ENCODE measurements at regions of chr12 and their contacts with region 1.

Region 1: DNA sequence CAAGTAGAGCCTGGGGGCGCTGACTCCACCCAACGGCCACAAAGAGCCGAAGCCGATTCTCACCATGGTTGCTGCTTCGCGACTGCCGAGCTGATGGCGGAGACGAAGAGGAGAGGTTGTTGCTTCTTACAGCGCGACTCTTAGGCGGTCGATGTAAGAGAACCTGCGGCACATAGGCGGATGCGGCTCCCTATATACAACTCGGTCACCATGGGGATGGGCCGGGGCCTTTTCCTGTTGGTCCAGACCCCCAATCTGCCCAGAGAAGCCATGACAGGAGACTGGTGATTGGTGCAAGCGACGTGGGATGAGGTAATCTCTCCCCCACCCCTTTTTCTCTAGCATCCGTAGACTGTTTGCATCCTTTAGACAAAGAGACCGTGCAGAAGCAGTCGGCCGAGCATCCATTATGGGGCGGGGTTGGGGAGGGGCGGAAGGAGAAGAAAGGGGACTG is at the start of gene TUBA1A:
- DNase-seq: peak; percentile 80 to 99 (median 96)
- ATAC-seq: peak; percentile 79 to 84
- H3K4me3 Mint-ChIP-seq: peak within 1 kb of the TSS; percentile 91 to 99 (median 96)
- H3K27ac Mint-ChIP-seq: peak within 1 kb of the TSS; percentile 97 to 100 (median 99)
- H3K4me1 Mint-ChIP-seq: peaks cover 14 to 31% (median 24%) of the 10 kb centered on the region in 4 donors
- H3K27me3 Mint-ChIP-seq: no peaks in the 10 kb centered on the region
- polyA plus RNA-seq, gene TUBA1A: 139 to 168 (median 147) TPM

Region 2: GRCh38 chr12:49069507-49070346 is 119.2 kb before region 1 on chr12 and contains the start of gene RHEBL1:
- POLR2A ChIA-PET with region 1: interaction called, 14 read pairs
- DNase-seq: peak; percentile 93 to 99 (median 98)
- ATAC-seq: peak; percentile 98 to 99
- H3K4me3 Mint-ChIP-seq: peak within 1 kb of the TSS; percentile 91 to 99 (median 96)
- H3K27ac Mint-ChIP-seq: peak within 1 kb of the TSS; percentile 66 to 97 (median 92)
- H3K4me1 Mint-ChIP-seq: peaks cover 10 to 20% (median 18%) of the 10 kb centered on the region in 4 donors
- H3K27me3 Mint-ChIP-seq: no peaks in the 10 kb centered on the region
- polyA plus RNA-seq, gene RHEBL1: 3.0 to 3.6 (median 3.4) TPM

Region 3: GRCh38 chr12:49110464-49111155 is 78.3 kb before region 1 on chr12 and contains the start of gene LMBR1L:
- POLR2A ChIA-PET with region 1: interaction called, 52 read pairs
- DNase-seq: peak; percentile 85 to 99 (median 96)
- ATAC-seq: peak; percentile 93 to 94
- H3K4me3 Mint-ChIP-seq: peak within 1 kb of the TSS; percentile 89 to 99 (median 98)
- H3K27ac Mint-ChIP-seq: peak within 1 kb of the TSS; percentile 92 to 99 (median 98)
- H3K4me1 Mint-ChIP-seq: peaks cover 26 to 48% (median 44%) of the 10 kb centered on the region in 4 donors
- H3K27me3 Mint-ChIP-seq: no peaks in the 10 kb centered on the region
- polyA plus RNA-seq, gene LMBR1L: 34.0 to 45.8 (median 34.6) TPM

Region 4: DNA sequence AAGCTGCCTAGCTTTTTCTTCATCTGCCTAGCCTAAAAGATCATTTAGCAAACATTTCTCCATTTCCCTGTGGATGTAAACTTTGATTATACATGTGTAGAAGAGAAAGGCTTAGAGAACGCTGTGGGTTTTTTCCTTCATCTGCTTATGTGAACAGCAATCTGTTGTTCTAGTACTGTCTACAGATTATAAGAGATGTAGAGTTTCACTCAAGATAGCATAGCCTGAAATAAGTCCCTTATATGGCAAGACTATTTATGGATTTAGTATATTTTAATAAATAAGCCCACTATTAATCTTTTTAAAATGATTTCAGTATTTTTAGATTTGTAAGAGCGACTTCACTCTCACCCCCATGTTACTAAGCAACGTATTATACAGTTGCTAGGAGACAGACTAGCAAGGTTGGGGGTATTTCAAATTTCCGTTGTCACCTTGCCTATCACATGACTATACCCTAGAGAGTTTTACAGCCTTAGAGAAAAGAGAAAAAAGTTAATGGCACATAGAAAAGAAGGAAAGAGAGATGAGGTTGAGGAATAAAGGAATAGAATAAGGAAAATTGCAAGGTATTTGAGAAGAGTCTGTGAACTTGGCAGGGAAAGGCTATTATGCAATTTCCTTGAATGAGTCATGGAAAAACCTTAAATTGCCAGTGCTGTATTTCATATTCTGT is 12.1 kb after region 1 on chr12:
- POLR2A ChIA-PET with region 1: interaction called, 13 read pairs
- DNase-seq: peak in 4 of 10 donors; percentile 47 to 74 (median 60)
- ATAC-seq: peak; percentile 87 to 98
- H3K4me3 Mint-ChIP-seq: peak overlapping the region in 3 of 10 donors; percentile 0 to 44 (median 29)
- H3K27ac Mint-ChIP-seq: peak overlapping the region; percentile 1 to 84 (median 36)
- H3K4me1 Mint-ChIP-seq: peaks cover 6 to 15% (median 10%) of the 10 kb centered on the region in 4 donors
- H3K27me3 Mint-ChIP-seq: no peaks in the 10 kb centered on the region

Region 5: DNA sequence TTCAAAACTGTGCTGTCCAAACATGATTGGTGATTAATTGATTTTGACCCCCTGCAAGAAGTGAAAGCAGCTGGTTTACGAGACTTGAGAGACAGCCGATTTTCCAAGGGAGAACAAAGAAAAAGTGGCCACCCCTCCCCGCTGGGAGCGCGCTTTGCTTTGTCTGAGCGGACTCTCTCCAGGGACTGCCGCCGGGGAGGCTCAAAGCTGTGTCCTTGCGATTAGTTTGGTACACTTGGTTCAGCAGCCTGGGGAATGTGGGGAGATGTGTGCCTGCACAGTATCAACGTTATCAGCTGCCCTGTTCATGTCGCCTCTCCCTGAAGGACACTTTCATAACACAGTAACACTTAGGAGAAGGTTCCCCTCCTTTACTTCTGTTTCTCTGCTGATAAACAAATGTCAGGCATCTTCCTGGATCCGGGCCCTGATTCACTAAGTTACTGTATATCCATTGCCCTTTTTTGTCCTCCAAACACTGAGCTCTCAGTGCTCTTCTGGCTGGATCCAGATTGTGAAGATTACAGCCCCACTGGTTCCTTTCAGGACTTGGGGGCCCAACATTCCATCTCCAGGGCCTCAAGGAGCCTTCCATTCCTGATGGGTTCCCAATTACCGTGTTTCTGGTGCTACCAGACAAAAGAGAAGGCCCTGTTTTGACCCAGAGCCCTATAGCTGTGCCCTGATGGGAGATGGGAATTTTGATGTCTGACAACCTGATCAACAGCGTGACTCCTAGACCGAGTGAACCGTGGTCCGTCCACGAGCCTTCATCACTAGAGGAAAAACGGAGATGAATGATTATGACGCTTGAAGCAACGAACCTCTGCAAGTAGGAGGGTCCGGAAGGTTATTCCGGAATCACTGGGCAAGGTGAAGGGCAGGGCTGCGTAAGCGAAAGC is 44.2 kb after region 1 on chr12:
- POLR2A ChIA-PET with region 1: interaction called, 47 read pairs
- DNase-seq: no peak
- ATAC-seq: no peak
- H3K4me3 Mint-ChIP-seq: peak overlapping the region in 9 of 10 donors; percentile 42 to 92 (median 67)
- H3K27ac Mint-ChIP-seq: peak overlapping the region in 9 of 10 donors; percentile 12 to 84 (median 61)
- H3K4me1 Mint-ChIP-seq: peaks cover 0 to 12% (median 4%) of the 10 kb centered on the region in 4 donors
- H3K27me3 Mint-ChIP-seq: no peaks in the 10 kb centered on the region

Region 6: DNA sequence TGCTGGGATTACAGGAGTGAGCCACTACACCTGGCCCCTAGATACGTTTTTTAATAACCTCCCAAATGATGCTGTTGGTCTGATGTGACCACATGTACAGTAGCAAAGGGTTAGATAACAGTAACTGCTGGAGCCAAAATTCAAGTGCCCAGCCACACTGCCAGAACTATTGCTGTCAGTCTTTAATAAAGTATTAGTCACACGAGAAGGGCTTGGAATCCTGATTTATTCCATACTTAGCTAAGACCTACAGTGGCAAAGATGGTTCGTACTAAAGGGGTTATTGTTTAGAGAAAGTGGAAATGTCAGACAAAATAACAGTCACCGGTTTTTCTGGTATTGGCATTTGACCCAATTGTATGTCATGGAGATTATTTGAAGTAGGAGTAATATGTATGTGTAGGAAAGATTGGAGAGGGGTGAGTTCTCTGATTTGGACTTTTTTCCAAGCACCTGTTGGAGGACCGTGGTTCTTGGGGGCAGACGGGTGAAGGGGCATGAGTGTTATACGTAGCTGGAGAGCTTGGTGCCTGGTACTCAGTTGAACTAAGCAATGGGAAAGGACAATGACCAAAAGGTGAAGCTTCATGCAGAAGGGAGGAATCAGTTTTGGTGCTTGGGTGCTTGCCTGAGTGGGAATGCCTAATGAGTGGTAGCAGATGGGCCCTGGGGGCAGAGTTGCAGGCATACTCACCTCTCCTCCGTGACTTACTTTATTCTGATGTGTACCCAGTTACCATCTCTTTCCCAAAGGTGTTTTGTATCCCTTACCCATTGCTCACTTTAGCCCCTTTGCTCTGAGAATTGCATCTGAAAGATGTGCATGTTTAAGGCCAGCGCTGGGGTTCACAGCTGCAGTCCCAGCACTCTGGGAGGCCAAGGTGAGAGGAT is 85.7 kb after region 1 on chr12:
- POLR2A ChIA-PET with region 1: no interaction called
- DNase-seq: no peak
- ATAC-seq: no peak
- H3K4me3 Mint-ChIP-seq: no peak overlapping the region
- H3K27ac Mint-ChIP-seq: no peak overlapping the region
- H3K4me1 Mint-ChIP-seq: peaks cover 0 to 3% (median 0%) of the 10 kb centered on the region in 4 donors
- H3K27me3 Mint-ChIP-seq: peaks cover 0 to 8% (median 0%) of the 10 kb centered on the region in 5 donors

Measured in naive thymus-derived CD8-positive, alpha-beta T cell (primary cell).